H1 (cell line): ENCODE measurements at regions of chr6 and their contacts with region 1.

Region 1: DNA sequence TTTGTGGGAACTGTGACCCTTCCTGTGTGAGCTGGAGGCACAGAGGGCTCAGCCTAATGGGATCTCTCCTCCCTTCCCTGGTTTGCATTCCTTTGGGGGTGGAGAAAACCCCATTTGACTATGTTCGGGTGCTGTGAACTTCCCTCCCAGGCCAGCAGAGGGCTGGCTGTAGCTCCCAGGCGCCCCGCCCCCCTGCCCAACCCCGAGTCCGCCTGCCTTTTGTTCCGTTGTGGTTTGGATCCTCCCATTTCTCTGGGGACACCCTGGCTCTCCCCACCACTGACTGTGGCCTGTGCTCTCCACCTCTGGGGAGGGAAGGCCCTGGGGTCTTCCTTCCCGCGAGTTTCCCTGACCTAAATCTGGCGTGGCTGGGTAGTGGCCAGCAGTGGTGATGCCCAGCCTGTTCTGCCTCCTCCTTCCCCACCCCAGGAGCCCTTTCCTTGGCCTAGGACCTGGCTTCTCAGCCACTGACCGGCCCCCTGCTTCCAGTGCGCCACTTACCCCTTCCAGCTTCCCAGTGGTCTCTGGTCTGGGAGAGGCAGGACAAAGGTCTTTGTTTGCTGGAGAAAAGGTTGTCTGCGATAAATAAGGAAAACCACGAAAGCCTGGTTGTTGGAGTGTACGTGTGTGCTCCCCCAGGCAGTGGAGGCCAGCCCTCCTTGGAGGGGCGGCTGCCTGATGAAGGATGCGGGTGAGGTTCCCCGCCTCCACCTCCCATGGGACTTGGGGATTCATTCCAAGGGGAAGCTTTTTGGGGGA is 4.9 kb downstream of the VEGFA start:
- DNase-seq: peak in 1 of 2 experiments; percentile 85
- H3K4me3 ChIP-seq: peak overlapping the region in 2 of 4 experiments; percentile 12 to 87; a peak in 4 of 8 replicates
- H3K27ac ChIP-seq: peak overlapping the region; percentile 37; the same call in 1 of the 2 replicates
- H3K4me1 ChIP-seq: peaks cover 0 to 24% (median 18%) of the 10 kb centered on the region in 4 experiments; a peak in 6 of 7 replicates
- H3K27me3 ChIP-seq: no peaks in the 10 kb centered on the region
- CTCF ChIP-seq: peak in 2 of 3 experiments; percentile 84 to 86; a peak in 3 of 4 replicates
- EP300 ChIP-seq: no peak
- POLR2A ChIP-seq: no peak
- RAD21 ChIP-seq: peak; percentile 65 to 69

Region 2: DNA sequence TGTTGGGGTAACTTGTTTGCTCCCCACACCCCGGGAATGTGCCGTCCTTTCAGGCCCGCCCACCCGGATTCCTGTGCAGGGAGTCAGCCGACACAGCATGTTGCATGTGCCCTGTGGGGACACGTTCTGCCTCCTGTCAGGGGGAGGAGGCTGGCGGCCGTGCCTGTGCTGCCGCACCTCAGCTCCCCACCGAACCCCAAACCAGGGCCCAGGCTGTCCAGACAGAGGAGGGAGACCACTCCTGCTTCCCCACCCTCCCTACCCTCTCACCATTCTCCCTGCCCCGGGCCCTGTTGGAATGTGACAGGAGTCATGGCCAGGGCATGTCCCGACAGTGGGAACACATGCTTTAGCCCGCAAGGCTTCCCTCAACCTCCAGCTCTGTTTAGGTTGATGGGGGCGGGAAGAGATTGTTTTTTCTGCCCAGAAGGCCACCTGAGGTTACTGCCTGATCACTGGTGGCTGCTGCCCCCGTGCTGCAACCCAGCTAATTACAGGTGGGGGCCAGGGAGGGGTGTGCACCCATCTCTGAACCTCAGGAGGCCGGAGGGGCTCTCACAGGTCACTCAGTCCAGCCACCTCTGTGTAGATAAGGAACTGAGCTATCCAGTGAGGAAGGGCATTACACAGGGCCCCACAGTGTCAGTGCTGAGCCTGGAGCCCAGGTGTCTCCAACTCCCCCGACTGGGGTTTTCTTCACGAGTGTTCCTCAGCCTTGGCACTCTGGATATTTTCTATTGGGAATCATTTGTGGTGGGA is 278.4 kb before region 1 on chr6:
- CTCF ChIA-PET with region 1: no interaction called
- POLR2A ChIA-PET with region 1: no interaction called
- DNase-seq: peak in 1 of 2 experiments; percentile 72
- H3K4me3 ChIP-seq: no peak overlapping the region
- H3K27ac ChIP-seq: no peak overlapping the region
- H3K4me1 ChIP-seq: peaks cover 7 to 19% (median 11%) of the 10 kb centered on the region in 4 experiments
- H3K27me3 ChIP-seq: no peaks in the 10 kb centered on the region
- CTCF ChIP-seq: peak; percentile 71 to 88 (median 79)
- EP300 ChIP-seq: no peak
- POLR2A ChIP-seq: no peak
- RAD21 ChIP-seq: peak; percentile 90 to 91

Region 3: GRCh38 chr6:43687437-43688347 is 87.3 kb before region 1 on chr6 and contains the start of gene MRPS18A:
- CTCF ChIA-PET with region 1: interaction called, 15 read pairs
- POLR2A ChIA-PET with region 1: no interaction called
- DNase-seq: peak in 1 of 2 experiments; percentile 87
- H3K4me3 ChIP-seq: peak within 1 kb of the TSS; percentile 94 to 99 (median 97)
- H3K27ac ChIP-seq: peak within 1 kb of the TSS; percentile 68
- H3K4me1 ChIP-seq: peaks cover 0 to 15% (median 3%) of the 10 kb centered on the region in 4 experiments; a peak in 5 of 7 replicates
- H3K27me3 ChIP-seq: no peaks in the 10 kb centered on the region
- CTCF ChIP-seq: no peak
- EP300 ChIP-seq: no peak
- POLR2A ChIP-seq: peak in 1 of 2 experiments; percentile 91; a peak in 2 of 3 replicates
- RAD21 ChIP-seq: no peak; a peak in 1 of 4 replicates
- total RNA-seq, gene MRPS18A: 48.3 and 52.1 TPM in 2 replicates

Region 4: DNA sequence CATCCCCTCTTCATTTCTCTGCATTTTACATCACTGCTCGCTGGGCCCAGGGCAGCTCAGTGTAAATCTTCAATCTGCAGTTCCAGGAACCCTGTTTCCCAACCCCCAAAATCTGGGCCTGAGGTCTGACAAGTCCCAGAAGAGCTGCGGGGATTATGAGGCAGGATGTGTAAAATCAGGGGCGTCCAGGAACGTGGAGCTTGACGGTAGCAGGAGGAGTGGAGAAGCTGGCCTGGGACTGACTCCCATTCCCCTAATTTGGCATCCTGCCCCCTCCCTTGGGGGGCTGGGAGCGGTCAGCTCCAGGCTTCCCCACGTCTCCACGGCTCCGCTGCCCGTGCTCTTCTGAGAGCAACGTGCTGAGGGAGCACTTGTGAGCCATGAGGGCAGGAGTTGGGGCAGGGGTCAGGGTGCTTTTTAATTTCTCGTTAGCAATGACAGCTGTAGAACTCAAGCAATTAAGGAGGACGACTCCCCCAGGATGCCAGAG is 28.3 kb before region 1 on chr6:
- CTCF ChIA-PET with region 1: interaction called, 35 read pairs
- POLR2A ChIA-PET with region 1: interaction called, 7 read pairs
- DNase-seq: peak in 1 of 2 experiments; percentile 42
- H3K4me3 ChIP-seq: no peak overlapping the region
- H3K27ac ChIP-seq: no peak overlapping the region
- H3K4me1 ChIP-seq: peaks cover 0 to 10% (median 3%) of the 10 kb centered on the region in 4 experiments; a peak in 4 of 7 replicates
- H3K27me3 ChIP-seq: no peaks in the 10 kb centered on the region
- CTCF ChIP-seq: no peak
- EP300 ChIP-seq: no peak
- POLR2A ChIP-seq: no peak
- RAD21 ChIP-seq: no peak

Region 5: GRCh38 chr6:43790025-43790523 is 15.1 kb after region 1 on chr6:
- CTCF ChIA-PET with region 1: interaction called, 73 read pairs
- POLR2A ChIA-PET with region 1: interaction called, 27 read pairs
- DNase-seq: no peak
- H3K4me3 ChIP-seq: no peak overlapping the region
- H3K27ac ChIP-seq: no peak overlapping the region
- H3K4me1 ChIP-seq: no peaks in the 10 kb centered on the region
- H3K27me3 ChIP-seq: no peaks in the 10 kb centered on the region
- CTCF ChIP-seq: no peak
- EP300 ChIP-seq: no peak
- POLR2A ChIP-seq: no peak
- RAD21 ChIP-seq: no peak

Region 6: DNA sequence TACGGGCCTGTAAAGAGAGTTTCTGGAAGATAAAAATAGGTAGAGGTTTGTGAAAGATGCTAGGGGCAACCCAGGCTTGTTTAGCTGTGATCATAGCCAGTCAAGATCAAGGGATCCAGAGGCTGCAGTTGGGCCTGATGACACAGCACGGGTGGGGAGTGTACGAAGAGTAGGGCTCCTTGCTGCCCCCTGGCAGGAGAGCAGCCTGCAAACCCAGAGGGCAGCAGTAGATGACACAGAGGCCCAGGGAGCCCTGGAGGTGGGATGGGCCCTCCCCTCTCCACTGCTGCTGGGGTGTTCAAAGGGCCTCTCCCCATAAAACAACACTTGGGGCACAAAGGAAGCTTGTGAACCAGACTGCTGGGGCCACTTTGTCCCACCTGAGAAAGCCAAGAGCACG is 42.2 kb after region 1 on chr6:
- CTCF ChIA-PET with region 1: interaction called, 13 read pairs
- POLR2A ChIA-PET with region 1: interaction called, 6 read pairs
- DNase-seq: peak; percentile 27 to 61
- H3K4me3 ChIP-seq: no peak overlapping the region
- H3K27ac ChIP-seq: no peak overlapping the region
- H3K4me1 ChIP-seq: no peaks in the 10 kb centered on the region
- H3K27me3 ChIP-seq: no peaks in the 10 kb centered on the region
- CTCF ChIP-seq: peak; percentile 70 to 76 (median 73)
- EP300 ChIP-seq: no peak
- POLR2A ChIP-seq: no peak
- RAD21 ChIP-seq: peak; percentile 49 to 61

Region 7: GRCh38 chr6:43856005-43856765 is 81.2 kb after region 1 on chr6:
- CTCF ChIA-PET with region 1: interaction called, 21 read pairs
- POLR2A ChIA-PET with region 1: interaction called, 3 read pairs
- DNase-seq: no peak
- H3K4me3 ChIP-seq: no peak overlapping the region
- H3K27ac ChIP-seq: no peak overlapping the region
- H3K4me1 ChIP-seq: peaks cover 0 to 6% (median 3%) of the 10 kb centered on the region in 4 experiments; a peak in 4 of 7 replicates
- H3K27me3 ChIP-seq: no peaks in the 10 kb centered on the region
- CTCF ChIP-seq: peak; percentile 42 to 71 (median 57); a peak in 3 of 4 replicates
- EP300 ChIP-seq: no peak
- POLR2A ChIP-seq: no peak
- RAD21 ChIP-seq: peak; percentile 35 to 58; a peak in 3 of 4 replicates

Region 8: DNA sequence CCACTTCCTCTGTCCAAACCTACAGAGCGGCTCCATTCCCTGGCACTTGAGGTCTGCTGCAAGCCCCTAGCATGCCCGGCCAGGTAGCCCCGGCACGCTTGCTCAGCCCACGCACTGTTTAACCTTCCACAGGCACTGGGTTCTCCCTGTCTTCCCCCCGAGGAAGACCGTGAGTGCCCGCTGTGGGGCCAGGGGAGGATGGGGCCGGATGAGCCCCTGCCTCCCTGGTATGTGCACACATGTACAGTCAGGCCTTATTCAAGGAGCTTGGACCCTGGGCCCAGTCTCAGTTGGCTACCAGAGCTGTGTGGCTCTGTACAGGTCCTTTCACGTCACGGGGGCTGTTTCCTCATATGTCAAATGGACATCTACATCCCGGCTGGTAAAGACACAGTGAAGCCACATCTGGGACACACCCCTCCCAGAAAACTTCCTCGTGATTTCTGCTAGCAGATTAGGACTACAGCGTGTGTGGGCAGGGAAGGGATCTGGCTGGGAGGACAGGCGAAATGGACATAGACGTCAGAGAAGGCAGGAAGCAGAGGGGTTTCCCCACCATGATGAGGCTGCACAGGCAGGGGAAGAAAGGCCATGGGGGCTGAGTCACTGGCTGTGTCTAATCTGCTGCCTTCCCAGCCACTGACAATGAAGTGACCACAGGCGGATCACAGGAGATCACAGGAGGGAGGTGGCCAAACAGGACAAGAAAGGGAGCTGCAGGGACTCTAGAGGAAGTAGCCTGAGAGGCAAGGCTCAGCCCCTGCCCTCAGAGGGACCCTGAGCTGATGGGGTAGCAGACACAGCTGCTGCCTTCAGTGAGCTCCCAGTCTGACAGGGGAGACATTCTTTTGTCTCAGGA is 289.4 kb after region 1 on chr6:
- CTCF ChIA-PET with region 1: interaction called, 25 read pairs
- POLR2A ChIA-PET with region 1: no interaction called
- DNase-seq: no peak
- H3K4me3 ChIP-seq: no peak overlapping the region
- H3K27ac ChIP-seq: no peak overlapping the region
- H3K4me1 ChIP-seq: peaks cover 0 to 16% (median 9%) of the 10 kb centered on the region in 4 experiments; a peak in 5 of 7 replicates
- H3K27me3 ChIP-seq: no peaks in the 10 kb centered on the region; a peak in 1 of 7 replicates
- CTCF ChIP-seq: no peak
- EP300 ChIP-seq: no peak
- POLR2A ChIP-seq: no peak
- RAD21 ChIP-seq: no peak